ENCODE measurements at regions of chr4 and their contacts with region 1.

Region 1: GRCh38 chr4:94621491-94622080 is 136.2 kb upstream of the BMPR1B start:
- DNase-seq: peak in 6 of 9 donors; percentile 11 to 45 (median 25)
- ATAC-seq: peak; percentile 50
- H3K4me3 ChIP-seq: no peak overlapping the region
- H3K4me3 Mint-ChIP-seq: no peak overlapping the region
- H3K27ac ChIP-seq: no peak overlapping the region
- H3K27ac Mint-ChIP-seq: no peak overlapping the region
- H3K4me1 ChIP-seq: no peaks in the 10 kb centered on the region
- H3K4me1 Mint-ChIP-seq: peaks cover 0 to 1% (median 0%) of the 10 kb centered on the region in 7 donors
- H3K27me3 ChIP-seq: no peaks in the 10 kb centered on the region
- H3K27me3 Mint-ChIP-seq: no peaks in the 10 kb centered on the region

Region 2: DNA sequence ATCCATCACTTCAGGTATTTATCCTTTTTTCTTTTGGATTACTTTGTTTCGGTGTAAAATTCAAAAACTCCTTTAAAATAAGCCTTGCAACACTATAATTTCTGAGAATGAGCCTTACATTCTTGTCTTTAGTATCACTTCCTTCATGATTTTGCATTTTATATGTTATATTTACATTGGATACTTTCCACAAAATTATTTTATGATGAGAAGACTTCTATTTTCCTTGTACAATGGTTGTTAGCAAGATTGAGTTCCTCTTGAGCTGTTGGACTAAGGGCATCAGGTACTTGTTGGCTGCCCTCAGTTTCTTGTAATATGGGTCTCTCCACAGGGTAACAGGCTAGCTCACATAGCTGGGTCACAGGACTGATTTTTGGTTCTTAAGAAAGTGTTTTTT is 256.3 kb before region 1 on chr4:
- CTCF ChIA-PET with region 1: no interaction called
- POLR2A ChIA-PET with region 1: no interaction called
- intact Hi-C with region 1: no loop called
- DNase-seq: no peak
- ATAC-seq: no peak
- H3K4me3 ChIP-seq: no peak overlapping the region
- H3K4me3 Mint-ChIP-seq: no peak overlapping the region
- H3K27ac ChIP-seq: no peak overlapping the region
- H3K27ac Mint-ChIP-seq: no peak overlapping the region
- H3K4me1 ChIP-seq: no peaks in the 10 kb centered on the region
- H3K4me1 Mint-ChIP-seq: no peaks in the 10 kb centered on the region
- H3K27me3 ChIP-seq: no peaks in the 10 kb centered on the region
- H3K27me3 Mint-ChIP-seq: peaks cover 8 to 26% (median 22%) of the 10 kb centered on the region in 5 donors

Region 3: GRCh38 chr4:94428884-94429557 is 192.6 kb before region 1 on chr4:
- CTCF ChIA-PET with region 1: no interaction called
- POLR2A ChIA-PET with region 1: no interaction called
- intact Hi-C with region 1: no loop called
- DNase-seq: no peak
- ATAC-seq: no peak
- H3K4me3 ChIP-seq: no peak overlapping the region
- H3K4me3 Mint-ChIP-seq: no peak overlapping the region
- H3K27ac ChIP-seq: no peak overlapping the region
- H3K27ac Mint-ChIP-seq: no peak overlapping the region
- H3K4me1 ChIP-seq: no peaks in the 10 kb centered on the region
- H3K4me1 Mint-ChIP-seq: no peaks in the 10 kb centered on the region
- H3K27me3 ChIP-seq: no peaks in the 10 kb centered on the region
- H3K27me3 Mint-ChIP-seq: peaks cover 0 to 3% (median under 1%) of the 10 kb centered on the region in 5 donors

Region 4: DNA sequence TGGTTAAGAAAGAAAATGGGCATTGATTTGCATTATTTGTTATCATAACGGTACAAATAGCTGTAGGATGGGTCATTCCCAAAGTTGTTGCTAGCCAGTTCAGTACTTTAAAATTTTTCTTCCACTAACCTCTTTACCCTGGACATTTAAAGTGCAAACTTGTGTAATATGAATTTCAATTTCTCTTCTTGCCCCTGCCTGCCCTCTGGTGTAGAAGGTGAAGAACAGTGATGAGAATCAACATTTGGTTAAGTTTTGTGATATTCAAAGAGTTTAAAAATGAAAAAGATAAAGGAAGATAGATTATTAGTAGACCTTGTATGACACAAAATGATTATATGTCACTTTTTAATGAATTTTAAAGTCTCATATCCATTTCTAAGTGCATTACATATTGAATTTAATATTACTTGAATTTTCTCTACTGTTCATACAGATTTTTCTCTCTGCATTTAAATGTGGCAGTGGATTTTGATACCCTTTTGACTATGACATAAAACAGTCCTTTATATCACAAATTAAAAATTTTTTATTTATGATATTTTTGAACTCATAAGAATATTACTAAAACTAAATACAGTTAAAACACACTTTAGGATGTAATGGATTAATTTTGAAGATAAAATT is 473.9 kb after region 1 on chr4:
- CTCF ChIA-PET with region 1: interaction called, 3 read pairs
- POLR2A ChIA-PET with region 1: no interaction called
- intact Hi-C with region 1: loop called (anchors 1 kb)
- DNase-seq: peak in 2 of 9 donors; percentile 17 to 29
- ATAC-seq: no peak
- H3K4me3 ChIP-seq: no peak overlapping the region
- H3K4me3 Mint-ChIP-seq: no peak overlapping the region
- H3K27ac ChIP-seq: no peak overlapping the region
- H3K27ac Mint-ChIP-seq: no peak overlapping the region
- H3K4me1 ChIP-seq: no peaks in the 10 kb centered on the region
- H3K4me1 Mint-ChIP-seq: peaks cover 0 to 18% (median 8%) of the 10 kb centered on the region in 7 donors
- H3K27me3 ChIP-seq: no peaks in the 10 kb centered on the region
- H3K27me3 Mint-ChIP-seq: peaks cover 0 to 19% (median 0%) of the 10 kb centered on the region in 5 donors

Region 5: DNA sequence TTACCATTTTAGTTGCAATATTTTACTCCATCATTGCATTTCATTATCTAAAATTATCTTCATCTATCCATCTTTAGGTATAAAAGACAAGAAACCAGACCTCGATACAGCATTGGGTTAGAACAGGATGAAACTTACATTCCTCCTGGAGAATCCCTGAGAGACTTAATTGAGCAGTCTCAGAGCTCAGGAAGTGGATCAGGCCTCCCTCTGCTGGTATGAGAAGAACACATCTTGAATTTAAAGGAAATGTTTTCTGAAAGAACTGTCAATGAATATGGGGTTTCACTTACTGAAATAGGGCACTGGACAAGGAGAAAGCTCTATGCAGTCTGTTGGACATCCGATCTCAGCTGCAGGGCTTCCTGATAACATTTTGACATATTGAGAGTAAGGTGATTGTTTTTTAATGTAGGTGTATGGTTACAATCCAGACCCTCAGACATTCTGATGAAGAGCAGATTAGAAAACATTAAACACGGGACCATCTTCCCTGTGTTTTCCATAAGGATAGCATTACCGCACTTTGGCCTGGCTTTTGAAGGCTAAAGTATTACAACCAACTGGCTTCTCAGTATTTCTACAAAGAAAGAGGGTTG is 503.4 kb after region 1 on chr4:
- CTCF ChIA-PET with region 1: no interaction called
- POLR2A ChIA-PET with region 1: no interaction called
- intact Hi-C with region 1: loop called (anchors 1 kb)
- DNase-seq: no peak
- ATAC-seq: no peak
- H3K4me3 ChIP-seq: no peak overlapping the region
- H3K4me3 Mint-ChIP-seq: no peak overlapping the region
- H3K27ac ChIP-seq: no peak overlapping the region
- H3K27ac Mint-ChIP-seq: no peak overlapping the region
- H3K4me1 ChIP-seq: no peaks in the 10 kb centered on the region
- H3K4me1 Mint-ChIP-seq: peaks cover 0 to 5% (median 1%) of the 10 kb centered on the region in 7 donors
- H3K27me3 ChIP-seq: no peaks in the 10 kb centered on the region
- H3K27me3 Mint-ChIP-seq: peaks cover 0 to 6% (median 3%) of the 10 kb centered on the region in 5 donors

Region 6: GRCh38 chr4:95779447-95779846 is 1157.9 kb after region 1 on chr4:
- CTCF ChIA-PET with region 1: no interaction called
- POLR2A ChIA-PET with region 1: no interaction called
- intact Hi-C with region 1: no loop called
- DNase-seq: no peak
- ATAC-seq: no peak
- H3K4me3 ChIP-seq: no peak overlapping the region
- H3K4me3 Mint-ChIP-seq: no peak overlapping the region
- H3K27ac ChIP-seq: no peak overlapping the region
- H3K27ac Mint-ChIP-seq: no peak overlapping the region
- H3K4me1 ChIP-seq: no peaks in the 10 kb centered on the region
- H3K4me1 Mint-ChIP-seq: no peaks in the 10 kb centered on the region
- H3K27me3 ChIP-seq: no peaks in the 10 kb centered on the region
- H3K27me3 Mint-ChIP-seq: peaks cover 0 to 5% (median 0%) of the 10 kb centered on the region in 5 donors

Measured in naive thymus-derived CD4-positive, alpha-beta T cell (primary cell).